ENCODE measurements at regions of chr1 and their contacts with region 1.

Region 1: GRCh38 chr1:172154551-172154950 is 265.9 kb upstream of the C1orf105 start:
- DNase-seq: no peak
- ATAC-seq: peak; percentile 83
- H3K4me3 Mint-ChIP-seq: peak overlapping the region; percentile 67
- H3K27ac Mint-ChIP-seq: peak overlapping the region; percentile 89
- H3K4me1 Mint-ChIP-seq: peaks cover 31% of the 10 kb centered on the region
- H3K27me3 Mint-ChIP-seq: no peaks in the 10 kb centered on the region
- CTCF ChIP-seq: no peak

Region 2: DNA sequence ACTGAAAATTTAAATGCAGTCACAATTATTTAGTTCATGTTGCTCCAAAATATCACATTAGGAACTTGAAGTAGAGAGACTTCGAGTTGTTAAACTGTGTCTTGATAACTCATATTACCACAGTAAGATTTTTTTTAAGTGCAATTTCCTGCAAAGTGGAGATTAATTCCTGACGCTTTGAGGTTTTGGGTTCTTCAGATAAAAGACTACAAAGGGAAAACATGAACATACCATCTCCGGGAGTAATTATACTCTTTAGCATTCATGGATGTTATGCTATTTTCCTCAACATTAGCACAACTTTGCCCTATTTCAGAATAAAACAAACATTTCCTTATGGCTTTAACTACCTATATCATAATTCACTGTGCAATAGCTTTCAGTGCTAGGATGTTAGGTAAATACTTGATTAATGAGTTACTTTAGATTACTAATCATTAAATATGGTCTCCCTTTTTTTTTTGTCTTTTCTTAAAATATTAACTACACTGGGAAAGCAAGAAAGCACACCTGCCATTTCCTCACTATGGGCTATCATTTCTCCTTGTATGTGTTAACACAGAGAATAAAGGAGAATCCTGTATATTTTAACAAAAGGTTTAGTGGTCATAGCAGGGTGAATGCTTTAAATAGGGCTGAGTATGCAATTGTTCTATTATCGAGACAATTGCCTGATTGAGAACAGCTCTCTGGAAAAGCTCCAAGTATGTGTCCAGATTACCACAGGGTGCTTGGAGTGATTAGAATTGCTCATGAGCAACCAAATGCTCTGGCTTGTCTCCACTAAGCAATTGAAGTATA is 13.4 kb after region 1 on chr1:
- CTCF ChIA-PET with region 1: no interaction called
- POLR2A ChIA-PET with region 1: no interaction called
- intact Hi-C with region 1: loop called (anchors 1 kb)
- DNase-seq: no peak
- ATAC-seq: no peak
- H3K4me3 Mint-ChIP-seq: no peak overlapping the region
- H3K27ac Mint-ChIP-seq: no peak overlapping the region
- H3K4me1 Mint-ChIP-seq: peaks cover 6% of the 10 kb centered on the region
- H3K27me3 Mint-ChIP-seq: no peaks in the 10 kb centered on the region
- CTCF ChIP-seq: no peak